Breast epithelium (tissue), 4 donors: ENCODE measurements at regions of chr3 and their contacts with region 1.

Region 1: GRCh38 chr3:72092778-72093177 is 307.8 kb upstream of the PROK2 start:
- DNase-seq: no peak
- H3K4me3 ChIP-seq: no peak overlapping the region
- H3K27ac ChIP-seq: no peak overlapping the region
- H3K4me1 ChIP-seq: no peaks in the 10 kb centered on the region
- H3K27me3 ChIP-seq: no peaks in the 10 kb centered on the region
- CTCF ChIP-seq: no peak
- POLR2A ChIP-seq: no peak

Region 2: GRCh38 chr3:72698154-72698917 is 605.6 kb after region 1 on chr3:
- intact Hi-C with region 1: loop called (anchors 5 kb)
- DNase-seq: no peak
- H3K4me3 ChIP-seq: no peak overlapping the region
- H3K27ac ChIP-seq: no peak overlapping the region
- H3K4me1 ChIP-seq: no peaks in the 10 kb centered on the region
- H3K27me3 ChIP-seq: no peaks in the 10 kb centered on the region
- CTCF ChIP-seq: no peak
- POLR2A ChIP-seq: no peak